AG04450 (cell line): ENCODE measurements at regions of chr3 and their contacts with region 1.

Region 1: DNA sequence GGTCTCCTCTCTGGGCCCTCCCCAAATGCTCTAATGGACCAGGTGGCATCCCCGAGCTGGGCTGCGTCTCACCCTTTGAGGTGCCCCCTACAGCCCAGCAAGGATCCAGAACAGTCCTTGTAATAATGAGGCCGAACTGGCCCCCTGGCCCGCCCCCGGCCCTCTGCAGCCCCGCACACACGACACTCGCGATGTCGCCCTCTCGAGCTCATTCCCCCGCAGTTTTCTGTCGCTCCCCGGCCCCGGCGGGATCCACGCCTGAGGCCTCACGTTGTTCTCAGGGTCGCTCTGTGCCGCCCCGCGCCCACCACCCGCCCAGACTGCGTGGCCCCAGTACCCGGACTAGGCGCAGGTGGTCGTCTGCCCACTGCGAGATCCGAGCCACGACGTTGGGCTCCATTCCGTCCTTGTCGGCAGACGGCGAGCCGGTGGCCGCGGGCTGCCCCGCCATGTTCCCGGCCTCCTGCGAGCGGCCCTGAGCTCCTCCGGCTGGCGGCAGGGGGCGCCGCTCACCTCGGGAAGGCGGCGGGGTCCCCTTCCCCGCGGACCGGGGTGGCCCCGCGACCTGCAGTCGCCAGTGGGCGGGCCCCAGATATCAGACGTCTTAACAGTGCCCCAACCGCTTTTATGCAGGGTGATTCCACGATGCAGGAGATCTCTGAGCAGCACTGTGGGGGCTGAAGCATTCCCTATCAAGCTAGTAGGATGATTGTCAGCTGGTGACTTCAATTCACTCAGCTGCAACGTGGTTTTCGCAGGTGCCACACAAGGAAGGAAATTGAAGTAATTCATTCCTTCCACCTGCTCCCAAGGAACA is at the start of gene C3orf33:
- DNase-seq: peak; percentile 6
- H3K4me3 ChIP-seq: peak within 1 kb of the TSS; percentile 72
- H3K27ac ChIP-seq: peak within 1 kb of the TSS; percentile 47
- H3K27me3 ChIP-seq: no peaks in the 10 kb centered on the region
- CTCF ChIP-seq: peak; percentile 81
- polyA plus RNA-seq, gene C3orf33: 2.5 and 2.9 TPM in 2 replicates

Region 2: DNA sequence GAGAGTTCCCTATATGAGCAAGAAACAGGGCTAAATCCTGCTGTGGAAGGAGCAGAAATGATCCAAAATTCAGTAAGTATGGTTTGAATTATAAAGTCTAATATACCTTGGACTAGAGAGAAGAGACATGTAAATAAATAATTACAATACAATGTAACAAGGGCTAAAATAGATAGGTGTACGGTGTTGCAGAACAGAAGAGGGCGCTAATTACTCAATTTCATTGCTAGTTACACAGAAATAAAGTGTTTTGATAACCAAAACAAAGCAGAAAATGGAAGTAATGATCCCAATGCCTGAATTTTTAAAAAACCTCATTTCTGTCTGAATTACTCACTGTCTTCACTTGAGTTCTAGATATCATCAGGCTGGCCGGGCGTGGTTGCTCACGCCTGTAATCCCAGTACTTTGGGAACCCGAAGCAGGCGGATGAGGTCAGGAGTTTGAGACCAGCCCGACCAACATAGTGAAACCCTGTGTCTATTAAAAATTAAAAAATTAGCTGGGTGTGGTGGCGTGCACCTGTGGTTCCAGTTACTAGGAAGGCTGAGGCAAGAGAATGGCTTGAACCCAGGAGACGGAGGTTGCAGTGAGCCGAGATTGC is 52.9 kb before region 1 on chr3:
- CTCF ChIA-PET with region 1: interaction called, 11 read pairs
- POLR2A ChIA-PET with region 1: no interaction called
- DNase-seq: no peak
- H3K4me3 ChIP-seq: no peak overlapping the region
- H3K27ac ChIP-seq: no peak overlapping the region
- H3K27me3 ChIP-seq: peaks cover under 1% of the 10 kb centered on the region
- CTCF ChIP-seq: peak; percentile 45

Region 3: GRCh38 chr3:155778462-155778861 is 27.5 kb before region 1 on chr3:
- CTCF ChIA-PET with region 1: interaction called, 29 read pairs
- POLR2A ChIA-PET with region 1: no interaction called
- DNase-seq: no peak
- H3K4me3 ChIP-seq: no peak overlapping the region
- H3K27ac ChIP-seq: no peak overlapping the region
- H3K27me3 ChIP-seq: no peaks in the 10 kb centered on the region
- CTCF ChIP-seq: no peak

Region 4: GRCh38 chr3:155835341-155836071 is 29.5 kb after region 1 on chr3:
- CTCF ChIA-PET with region 1: interaction called, 16 read pairs
- POLR2A ChIA-PET with region 1: no interaction called
- DNase-seq: no peak
- H3K4me3 ChIP-seq: no peak overlapping the region
- H3K27ac ChIP-seq: no peak overlapping the region
- H3K27me3 ChIP-seq: no peaks in the 10 kb centered on the region
- CTCF ChIP-seq: no peak

Region 5: GRCh38 chr3:155854141-155854940 is 48.3 kb after region 1 on chr3 and contains the start of gene SLC33A1:
- CTCF ChIA-PET with region 1: interaction called, 40 read pairs
- POLR2A ChIA-PET with region 1: interaction called, 3 read pairs
- DNase-seq: peak; percentile 98
- H3K4me3 ChIP-seq: peak within 1 kb of the TSS; percentile 97
- H3K27ac ChIP-seq: peak within 1 kb of the TSS; percentile 98
- H3K27me3 ChIP-seq: no peaks in the 10 kb centered on the region
- CTCF ChIP-seq: no peak
- polyA plus RNA-seq, gene SLC33A1: 23.0 and 27.8 TPM in 2 replicates

Region 6: GRCh38 chr3:155938409-155938808 is 132.4 kb after region 1 on chr3:
- CTCF ChIA-PET with region 1: interaction called, 13 read pairs
- POLR2A ChIA-PET with region 1: no interaction called
- DNase-seq: peak; percentile 21
- H3K4me3 ChIP-seq: no peak overlapping the region
- H3K27ac ChIP-seq: no peak overlapping the region
- H3K27me3 ChIP-seq: no peaks in the 10 kb centered on the region
- CTCF ChIP-seq: no peak

Region 7: GRCh38 chr3:156151824-156152428 is 345.9 kb after region 1 on chr3:
- CTCF ChIA-PET with region 1: interaction called, 18 read pairs
- POLR2A ChIA-PET with region 1: no interaction called
- DNase-seq: peak; percentile 16
- H3K4me3 ChIP-seq: no peak overlapping the region
- H3K27ac ChIP-seq: no peak overlapping the region
- H3K27me3 ChIP-seq: no peaks in the 10 kb centered on the region
- CTCF ChIP-seq: peak; percentile 78

Region 8: DNA sequence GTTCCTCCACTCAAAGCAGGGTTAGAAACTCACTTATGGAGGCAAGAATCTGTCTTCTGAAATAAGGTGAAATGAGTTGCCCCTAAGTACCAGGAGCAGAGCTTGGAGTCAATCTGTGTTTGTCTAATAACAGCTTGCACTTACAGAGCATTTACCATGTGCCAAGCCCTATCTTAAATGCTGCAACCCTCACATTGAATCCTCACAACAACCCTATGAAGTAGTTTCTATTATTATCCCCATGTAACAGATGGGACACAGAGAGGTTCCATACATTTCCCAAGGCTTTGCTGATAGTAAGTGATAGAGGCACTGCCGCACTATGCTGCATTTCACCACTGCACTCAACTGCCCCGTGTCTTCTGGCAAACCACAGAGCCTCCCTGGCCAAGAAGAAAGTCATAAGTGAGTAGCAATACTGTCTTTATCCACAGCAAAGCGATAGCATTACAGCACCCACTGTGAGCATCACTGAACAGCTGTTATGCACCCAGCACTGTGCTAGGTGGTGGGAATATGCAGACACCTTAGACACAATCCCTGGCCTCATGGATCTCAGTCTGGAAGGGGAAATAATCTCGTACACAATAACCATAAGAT is 607.4 kb after region 1 on chr3:
- CTCF ChIA-PET with region 1: no interaction called
- POLR2A ChIA-PET with region 1: no interaction called
- DNase-seq: no peak
- H3K4me3 ChIP-seq: no peak overlapping the region
- H3K27ac ChIP-seq: no peak overlapping the region
- H3K27me3 ChIP-seq: peaks cover 3% of the 10 kb centered on the region
- CTCF ChIP-seq: no peak